K562 (cell line): ENCODE measurements at regions of chr3 and their contacts with region 1.

Region 1: DNA sequence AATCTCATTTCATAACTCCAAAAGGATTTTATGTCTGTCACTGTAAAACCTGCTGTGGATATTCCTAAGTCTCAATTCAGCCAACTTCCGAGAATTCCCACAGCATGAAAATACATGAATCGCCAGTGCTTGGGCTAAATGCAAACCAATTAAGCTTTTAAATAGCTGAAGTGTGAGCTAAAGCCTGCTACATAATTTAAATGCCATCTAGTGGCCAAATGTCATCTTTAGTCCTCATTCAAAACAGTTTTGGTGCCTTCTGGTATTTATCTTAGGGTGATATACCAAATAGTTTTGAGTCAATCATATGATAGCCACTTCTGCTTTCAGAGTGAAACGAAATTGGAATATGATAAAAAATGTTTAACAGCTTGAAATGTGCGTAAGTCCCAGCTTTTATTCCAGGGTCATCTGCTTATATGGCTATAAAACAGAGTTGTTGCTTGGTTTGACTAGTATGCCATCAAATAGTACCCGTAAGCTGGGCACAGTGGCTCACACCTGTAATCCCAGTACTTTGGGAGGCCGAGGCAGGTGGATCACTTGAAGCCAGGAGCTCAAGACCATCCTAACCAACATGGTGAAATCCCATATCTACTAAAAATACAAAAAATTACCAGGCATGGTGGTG is 41.8 kb upstream of the CCNL1 start:
- DNase-seq: peak; percentile 40 to 55 (median 50)
- ATAC-seq: peak; percentile 90
- H3K4me3 ChIP-seq: no peak overlapping the region
- H3K27ac ChIP-seq: no peak overlapping the region
- H3K4me1 ChIP-seq: no peaks in the 10 kb centered on the region
- H3K27me3 ChIP-seq: peaks cover 0 to 7% of the 10 kb centered on the region in 2 experiments; a peak in 2 of 5 replicates
- CTCF ChIP-seq: peak; percentile 40 to 84 (median 50); a peak in 5 of 6 replicates
- EP300 ChIP-seq: no peak
- POLR2A ChIP-seq: no peak
- RAD21 ChIP-seq: peak; percentile 80 to 88

Region 2: GRCh38 chr3:157159762-157160657 is 41.8 kb before region 1 on chr3 and contains the start of gene CCNL1:
- CTCF ChIA-PET with region 1: no interaction called
- POLR2A ChIA-PET with region 1: interaction called, 17 read pairs
- in situ Hi-C with region 1: no loop called
- intact Hi-C with region 1: loop called (anchors 1 kb)
- DNase-seq: peak; percentile 86 to 98 (median 89)
- ATAC-seq: peak; percentile 92
- H3K4me3 ChIP-seq: peak within 1 kb of the TSS; percentile 91
- H3K27ac ChIP-seq: peak within 1 kb of the TSS; percentile 96
- H3K4me1 ChIP-seq: peaks cover 14 to 17% of the 10 kb centered on the region in 2 experiments
- H3K27me3 ChIP-seq: no peaks in the 10 kb centered on the region
- CTCF ChIP-seq: peak in 1 of 3 experiments; percentile 1; a peak in 1 of 6 replicates
- EP300 ChIP-seq: peak; percentile 80
- POLR2A ChIP-seq: peak; percentile 99
- RAD21 ChIP-seq: peak in 1 of 2 experiments; percentile 25; a peak in 1 of 4 replicates
- polyA plus RNA-seq, gene CCNL1: 16.1 to 32.4 TPM

Region 3: GRCh38 chr3:157239082-157239704 is 37.4 kb after region 1 on chr3:
- CTCF ChIA-PET with region 1: interaction called, 8 read pairs
- POLR2A ChIA-PET with region 1: no interaction called
- in situ Hi-C with region 1: no loop called
- intact Hi-C with region 1: loop called (anchors 1 kb)
- DNase-seq: peak; percentile 48 to 79 (median 60)
- ATAC-seq: peak; percentile 99
- H3K4me3 ChIP-seq: no peak overlapping the region
- H3K27ac ChIP-seq: no peak overlapping the region
- H3K4me1 ChIP-seq: peaks cover 0 to 6% of the 10 kb centered on the region in 2 experiments; a peak in 1 of 5 replicates
- H3K27me3 ChIP-seq: no peaks in the 10 kb centered on the region
- CTCF ChIP-seq: peak; percentile 88 to 92 (median 91)
- EP300 ChIP-seq: no peak
- POLR2A ChIP-seq: no peak
- RAD21 ChIP-seq: peak; percentile 91 to 94

Region 4: DNA sequence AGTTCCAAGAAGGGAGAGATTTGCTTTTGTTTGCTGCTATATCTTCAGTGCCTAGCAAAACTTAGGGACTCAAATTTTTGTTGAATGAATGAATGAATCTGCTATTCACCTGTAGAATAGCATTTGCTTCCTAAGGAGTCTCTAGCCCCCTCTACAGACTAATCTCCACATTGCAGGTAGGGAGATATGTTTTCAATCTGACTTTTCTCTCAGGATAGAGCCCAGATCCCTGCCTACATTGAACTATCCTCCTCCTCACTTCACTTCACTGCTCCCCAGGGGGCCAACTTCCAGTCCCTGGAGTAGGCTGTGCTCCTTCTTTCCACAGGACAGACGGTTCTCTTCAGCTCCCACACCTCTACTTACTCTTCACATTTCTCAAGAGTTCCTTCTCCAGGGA is 153.0 kb after region 1 on chr3:
- CTCF ChIA-PET with region 1: interaction called, 4 read pairs
- POLR2A ChIA-PET with region 1: no interaction called
- in situ Hi-C with region 1: no loop called
- intact Hi-C with region 1: loop called (anchors 2 kb)
- DNase-seq: peak; percentile 16 to 24 (median 19)
- ATAC-seq: peak; percentile 67; the same call in 2 of the 3 replicates
- H3K4me3 ChIP-seq: no peak overlapping the region
- H3K27ac ChIP-seq: no peak overlapping the region
- H3K4me1 ChIP-seq: peaks cover 0 to 7% of the 10 kb centered on the region in 2 experiments; a peak in 3 of 5 replicates
- H3K27me3 ChIP-seq: no peaks in the 10 kb centered on the region
- CTCF ChIP-seq: peak; percentile 33 to 59 (median 58); a peak in 5 of 6 replicates
- EP300 ChIP-seq: no peak
- POLR2A ChIP-seq: no peak
- RAD21 ChIP-seq: peak; percentile 39 to 54

Region 5: DNA sequence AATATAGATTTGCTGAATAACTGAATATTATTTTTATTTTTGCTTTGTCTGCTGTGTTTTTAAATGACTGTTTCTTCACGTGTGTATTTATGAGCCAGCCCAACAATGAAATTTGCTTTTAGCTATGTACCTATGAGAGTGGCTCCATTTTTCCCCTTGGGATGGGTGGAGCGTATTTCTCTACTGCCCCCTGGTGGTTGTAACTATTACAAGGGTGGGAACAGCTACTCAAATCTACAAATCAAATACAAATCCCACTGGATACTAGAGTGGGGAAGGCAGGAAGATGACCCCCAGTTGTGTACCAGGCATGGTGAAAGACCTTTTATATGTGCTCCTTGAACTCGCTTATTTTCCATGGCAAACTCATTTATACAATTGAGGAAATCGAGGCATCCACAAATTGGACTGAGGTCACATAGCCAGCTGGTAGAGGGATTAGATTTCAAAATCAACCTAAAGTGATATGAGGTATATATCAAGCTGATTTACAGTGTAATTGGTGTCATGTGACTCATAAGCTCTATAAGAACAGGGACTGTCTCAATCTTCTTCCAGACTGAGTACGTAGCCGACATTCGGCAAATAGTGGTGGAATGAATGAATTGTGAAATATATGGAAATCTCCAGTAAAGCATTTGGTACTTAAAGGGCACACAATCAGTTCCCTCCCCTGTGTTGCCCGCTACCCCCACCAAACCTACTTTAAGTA is 371.0 kb after region 1 on chr3:
- CTCF ChIA-PET with region 1: interaction called, 9 read pairs
- POLR2A ChIA-PET with region 1: no interaction called
- in situ Hi-C with region 1: no loop called
- intact Hi-C with region 1: loop called (anchors 2 kb)
- DNase-seq: peak; percentile 65 to 71 (median 68)
- ATAC-seq: peak; percentile 93
- H3K4me3 ChIP-seq: no peak overlapping the region
- H3K27ac ChIP-seq: no peak overlapping the region
- H3K4me1 ChIP-seq: no peaks in the 10 kb centered on the region
- H3K27me3 ChIP-seq: no peaks in the 10 kb centered on the region
- CTCF ChIP-seq: peak; percentile 68 to 74 (median 72)
- EP300 ChIP-seq: no peak
- POLR2A ChIP-seq: no peak
- RAD21 ChIP-seq: peak; percentile 68 to 87